HCT116 (cell line): ENCODE measurements at regions of chr1 and their contacts with region 1.

Region 1: GRCh38 chr1:179129702-179130473 is 48.0 kb downstream of the TOR3A start:
- DNase-seq: no peak
- ATAC-seq: peak; percentile 45
- H3K4me3 ChIP-seq: peak overlapping the region; percentile 10 to 33; a peak in 3 of 4 replicates
- H3K27ac ChIP-seq: peak overlapping the region; percentile 72
- H3K4me1 ChIP-seq: peaks cover 39 to 54% of the 10 kb centered on the region in 2 experiments
- H3K27me3 ChIP-seq: no peaks in the 10 kb centered on the region
- CTCF ChIP-seq: no peak
- POLR2A ChIP-seq: no peak
- RAD21 ChIP-seq: no peak

Region 2: DNA sequence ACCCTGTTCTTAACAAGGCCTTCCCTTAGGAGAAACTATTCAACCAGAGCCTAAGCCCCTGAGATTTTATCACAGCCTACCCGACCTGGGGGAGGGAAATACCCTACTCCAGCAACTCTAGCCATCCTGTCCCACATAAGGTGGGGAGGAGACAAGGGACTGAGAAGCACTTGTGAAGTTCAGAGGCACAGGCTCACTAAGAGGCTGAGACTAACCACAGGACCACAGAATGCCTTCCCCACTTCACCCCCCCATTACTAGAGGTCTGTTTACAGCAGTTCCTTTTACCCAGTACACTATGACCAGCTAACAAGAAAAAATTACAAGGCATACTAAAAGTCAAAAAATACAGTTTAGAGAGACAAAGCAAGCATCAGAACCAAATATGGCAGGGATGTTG is 530.1 kb before region 1 on chr1:
- CTCF ChIA-PET with region 1: no interaction called
- POLR2A ChIA-PET with region 1: no interaction called
- RAD21 ChIA-PET with region 1: no interaction called
- intact Hi-C with region 1: no loop called
- DNase-seq: no peak
- ATAC-seq: no peak
- H3K4me3 ChIP-seq: no peak overlapping the region
- H3K27ac ChIP-seq: no peak overlapping the region
- H3K4me1 ChIP-seq: no peaks in the 10 kb centered on the region
- H3K27me3 ChIP-seq: 0 out of 2 replicates have a peak, but pooled peaks cover 2% of the 10 kb centered on the region
- CTCF ChIP-seq: no peak
- POLR2A ChIP-seq: no peak
- RAD21 ChIP-seq: no peak

Region 3: DNA sequence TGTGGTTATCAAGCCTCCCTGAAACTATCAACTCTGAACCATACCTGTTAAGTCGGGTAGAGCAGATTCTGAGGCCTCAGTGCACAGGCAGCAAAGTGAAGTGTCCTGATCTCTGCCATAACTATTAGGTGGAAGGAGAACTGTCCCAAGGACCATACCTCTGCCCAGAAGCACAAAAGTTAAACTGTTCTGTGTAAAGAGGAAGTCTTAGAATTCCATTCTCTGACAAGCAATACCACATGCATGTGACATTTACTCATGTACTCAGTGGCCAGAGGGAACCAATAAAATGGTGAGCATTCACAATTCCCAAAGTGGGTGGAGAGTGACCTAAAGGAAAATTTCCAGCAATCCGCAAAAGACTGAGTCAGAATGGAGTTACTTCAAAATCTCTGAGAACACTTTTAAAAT is 13.0 kb after region 1 on chr1:
- CTCF ChIA-PET with region 1: no interaction called
- POLR2A ChIA-PET with region 1: no interaction called
- RAD21 ChIA-PET with region 1: no interaction called
- intact Hi-C with region 1: loop called (anchors 1 kb)
- DNase-seq: peak; percentile 92
- ATAC-seq: peak; percentile 89
- H3K4me3 ChIP-seq: peak overlapping the region; percentile 16 to 56
- H3K27ac ChIP-seq: peak overlapping the region; percentile 71; the same call in 1 of the 2 replicates
- H3K4me1 ChIP-seq: peaks cover 36 to 37% of the 10 kb centered on the region in 2 experiments
- H3K27me3 ChIP-seq: no peaks in the 10 kb centered on the region
- CTCF ChIP-seq: no peak
- POLR2A ChIP-seq: no peak
- RAD21 ChIP-seq: 0 out of 2 replicates have a peak, but pooled peaks have one; percentile 1

Region 4: GRCh38 chr1:179229214-179230140 is 99.6 kb after region 1 on chr1 and contains the start of gene ABL2:
- CTCF ChIA-PET with region 1: no interaction called
- POLR2A ChIA-PET with region 1: no interaction called
- RAD21 ChIA-PET with region 1: no interaction called
- intact Hi-C with region 1: loop called (anchors 5 kb)
- DNase-seq: peak; percentile 31
- ATAC-seq: peak; percentile 66
- H3K4me3 ChIP-seq: peak within 1 kb of the TSS; percentile 68 to 75
- H3K27ac ChIP-seq: peak within 1 kb of the TSS; percentile 69; the same call in 1 of the 2 replicates
- H3K4me1 ChIP-seq: peaks cover 25 to 49% of the 10 kb centered on the region in 2 experiments
- H3K27me3 ChIP-seq: no peaks in the 10 kb centered on the region
- CTCF ChIP-seq: no peak
- POLR2A ChIP-seq: no peak
- RAD21 ChIP-seq: no peak
- total RNA-seq, gene ABL2: 22.9 TPM

Region 5: GRCh38 chr1:179612361-179612760 is 482.5 kb after region 1 on chr1:
- CTCF ChIA-PET with region 1: no interaction called
- POLR2A ChIA-PET with region 1: no interaction called
- RAD21 ChIA-PET with region 1: no interaction called
- intact Hi-C with region 1: no loop called
- DNase-seq: no peak
- ATAC-seq: no peak
- H3K4me3 ChIP-seq: no peak overlapping the region
- H3K27ac ChIP-seq: no peak overlapping the region
- H3K4me1 ChIP-seq: no peaks in the 10 kb centered on the region
- H3K27me3 ChIP-seq: no peaks in the 10 kb centered on the region
- CTCF ChIP-seq: no peak
- POLR2A ChIP-seq: no peak
- RAD21 ChIP-seq: no peak